ENCODE measurements at regions of chr3 and their contacts with region 1.

Region 1: DNA sequence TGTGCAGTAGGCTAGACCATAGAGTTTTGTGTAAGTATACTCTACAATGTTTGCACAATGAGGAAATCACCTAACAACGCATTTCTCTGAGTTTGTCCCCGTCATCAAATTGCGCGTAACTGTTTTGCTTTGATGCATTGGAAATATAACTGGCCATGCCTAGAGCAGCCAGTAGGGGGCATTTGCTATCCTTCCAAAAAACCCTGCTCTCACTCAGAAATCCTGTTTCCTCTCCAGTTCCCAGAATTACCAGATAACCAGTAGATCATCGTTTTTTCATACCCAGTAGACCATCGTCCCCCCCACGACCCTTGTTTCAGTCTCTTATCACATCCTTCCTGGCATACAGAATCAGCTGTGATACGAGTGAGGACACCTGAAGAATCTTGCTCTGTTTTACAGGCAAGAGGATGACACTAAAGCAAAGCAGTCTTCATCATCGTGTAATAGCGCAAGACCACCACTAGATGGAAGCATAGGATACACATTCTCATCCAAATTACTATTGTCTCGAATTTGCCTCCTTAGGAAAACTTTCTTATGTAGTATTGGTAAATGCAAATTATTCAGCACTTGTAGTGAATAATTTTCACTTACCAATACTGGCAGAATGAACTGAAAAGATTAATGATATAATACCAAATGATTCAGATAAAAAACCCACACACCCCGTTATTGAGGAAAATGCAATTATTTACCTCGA is 4.4 kb upstream of the GABRR3 start:
- DNase-seq: peak; percentile 86
- H3K4me3 Mint-ChIP-seq: peak overlapping the region; percentile 66
- H3K27ac Mint-ChIP-seq: peak overlapping the region; percentile 82
- H3K4me1 Mint-ChIP-seq: peaks cover 19% of the 10 kb centered on the region
- H3K27me3 Mint-ChIP-seq: peaks cover 34% of the 10 kb centered on the region

Region 2: DNA sequence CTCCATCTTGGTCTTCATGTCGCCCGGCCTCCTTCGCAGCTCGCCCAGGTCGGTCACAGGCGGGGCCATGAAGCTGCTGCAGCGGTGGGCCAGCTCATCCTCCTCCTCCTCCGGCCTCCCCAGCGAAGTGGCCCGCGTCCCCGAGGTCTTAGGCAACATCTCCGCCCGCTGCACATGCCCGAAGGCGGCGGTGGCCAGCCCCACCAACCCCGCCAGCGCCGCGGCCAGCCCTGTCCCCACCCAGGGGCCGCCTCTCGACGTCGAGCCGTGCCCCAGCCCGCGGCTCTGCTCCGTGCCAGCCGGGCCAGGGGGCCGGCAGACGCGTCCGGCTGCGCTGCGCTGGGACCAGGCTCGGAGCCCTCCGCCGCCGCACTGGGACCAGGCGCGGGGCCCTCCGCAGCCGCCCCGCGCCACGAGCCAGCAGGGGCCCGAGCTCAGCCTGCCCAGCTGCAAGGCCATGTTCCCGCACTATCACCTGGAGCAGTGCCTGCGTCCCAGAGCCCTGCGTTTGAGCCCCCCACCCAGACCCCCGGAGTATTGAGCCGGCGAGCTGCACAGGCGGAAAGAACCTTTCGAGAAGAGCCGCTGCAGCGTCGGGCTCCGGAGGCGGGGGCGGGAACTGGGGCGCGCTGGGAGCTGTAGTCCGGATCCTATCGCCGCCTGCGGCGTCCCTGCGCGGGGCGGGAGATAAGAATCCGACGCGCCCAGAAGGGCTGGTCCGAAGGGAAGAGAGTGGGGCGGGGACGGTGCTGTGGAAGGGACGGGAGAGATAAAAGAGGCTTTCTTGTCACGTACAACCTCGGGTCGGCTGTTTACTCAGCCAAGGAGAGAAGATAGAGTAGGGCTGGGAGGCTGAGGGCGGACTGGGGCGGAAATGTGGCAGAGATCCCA is 553.8 kb after region 1 on chr3 and contains the start of gene CPOX:
- CTCF ChIA-PET with region 1: interaction called, 11 read pairs
- POLR2A ChIA-PET with region 1: no interaction called
- DNase-seq: peak; percentile 93
- H3K4me3 Mint-ChIP-seq: peak within 1 kb of the TSS; percentile 97
- H3K27ac Mint-ChIP-seq: peak within 1 kb of the TSS; percentile 93
- H3K4me1 Mint-ChIP-seq: peaks cover 61% of the 10 kb centered on the region
- H3K27me3 Mint-ChIP-seq: no peaks in the 10 kb centered on the region
- total RNA-seq, gene CPOX: 60.4 to 66.3 TPM

Measured in activated CD4-positive, alpha-beta T cell treated with anti-CD3 and anti-CD28 coated beads, Interleukin-2, amount 10 ng/mL, durations not matched to agents 7 days and 5 days (primary cell).